ENCODE measurements at regions of chr14 and their contacts with region 1.

Region 1: DNA sequence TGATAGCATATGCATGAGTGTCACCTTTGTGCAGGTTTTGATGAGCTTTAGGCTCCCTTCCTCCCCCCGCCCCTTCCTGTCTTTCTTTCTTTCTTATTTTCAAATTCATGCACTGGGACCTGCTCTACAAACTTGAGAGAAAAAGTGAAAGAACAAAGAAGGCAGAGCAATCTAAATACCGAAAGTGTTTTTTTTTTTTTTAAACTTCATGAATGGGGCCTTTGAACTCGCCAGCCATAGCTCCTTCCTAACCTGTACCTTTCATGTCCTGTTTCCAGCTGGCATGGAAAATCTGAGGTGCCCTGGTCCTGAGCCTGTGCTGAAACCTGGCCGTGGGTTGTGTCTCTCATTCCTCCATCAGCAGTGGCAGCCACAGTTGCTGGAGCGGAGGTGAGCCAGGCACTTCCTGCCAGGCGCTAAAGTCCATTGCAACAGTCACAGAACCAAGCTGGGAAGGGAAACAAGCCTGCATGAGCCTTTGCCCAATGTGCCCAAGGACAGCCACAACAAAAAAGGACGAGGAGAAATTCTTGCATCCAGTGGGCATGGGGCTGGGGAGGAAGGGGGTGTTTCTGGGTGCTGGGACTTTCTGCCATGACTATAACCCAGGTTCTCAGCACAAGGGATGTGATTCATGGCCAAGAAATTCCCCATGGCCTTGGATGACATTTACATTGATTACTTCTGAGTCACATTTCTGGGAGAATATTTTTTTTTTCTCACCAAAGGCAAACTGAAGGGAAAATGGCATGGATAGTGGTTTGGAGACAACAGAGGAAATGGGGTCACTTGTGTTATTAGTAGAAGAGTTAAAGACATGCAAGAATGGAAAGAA is 102.7 kb downstream of the TMEM30B start:
- DNase-seq: peak; percentile 33 to 80
- H3K4me3 ChIP-seq: no peak overlapping the region
- H3K27ac ChIP-seq: peak overlapping the region; percentile 35 to 64
- H3K4me1 ChIP-seq: peaks cover 0 to 9% of the 10 kb centered on the region in 2 donors
- H3K27me3 ChIP-seq: no peaks in the 10 kb centered on the region
- CTCF ChIP-seq: no peak

Region 2: GRCh38 chr14:61153431-61153830 is 25.0 kb before region 1 on chr14:
- intact Hi-C with region 1: loop called (anchors 2 kb)
- DNase-seq: no peak
- H3K4me3 ChIP-seq: no peak overlapping the region
- H3K27ac ChIP-seq: peak overlapping the region; percentile 3 to 88
- H3K4me1 ChIP-seq: peaks cover 0 to 30% of the 10 kb centered on the region in 2 donors
- H3K27me3 ChIP-seq: no peaks in the 10 kb centered on the region
- CTCF ChIP-seq: no peak

Measured in ascending aorta (tissue), 2 donors.